ENCODE measurements at regions of chr2 and their contacts with region 1.

Region 1: GRCh38 chr2:200713003-200713703 is 98.6 kb upstream of the BZW1 start:
- DNase-seq: peak; percentile 88 to 91
- ATAC-seq: peak; percentile 98

Region 2: GRCh38 chr2:200466425-200467418 is 246.4 kb before region 1 on chr2:
- intact Hi-C with region 1: no loop called
- DNase-seq: no peak
- ATAC-seq: peak; percentile 13

Region 3: GRCh38 chr2:200811336-200812121 is 98.4 kb after region 1 on chr2 and contains the start of gene BZW1:
- intact Hi-C with region 1: loop called in 1 of 2 experiments (anchors 10 kb)
- DNase-seq: peak; percentile 96
- ATAC-seq: peak; percentile 88
- total RNA-seq, gene BZW1: 211 to 240 TPM

Region 4: GRCh38 chr2:200829258-200829655 is 116.1 kb after region 1 on chr2:
- intact Hi-C with region 1: no loop called
- DNase-seq: no peak
- ATAC-seq: peak; percentile 8

Measured in left colon (tissue), 2 donors.